ENCODE measurements at regions of chr13 and their contacts with region 1.

Region 1: GRCh38 chr13:102460801-102461200 is 59.0 kb upstream of the FGF14 start:
- DNase-seq: no peak
- H3K4me3 Mint-ChIP-seq: no peak overlapping the region
- H3K27ac Mint-ChIP-seq: no peak overlapping the region
- H3K4me1 Mint-ChIP-seq: peaks cover 5% of the 10 kb centered on the region
- H3K27me3 Mint-ChIP-seq: peaks cover 11% of the 10 kb centered on the region

Region 2: DNA sequence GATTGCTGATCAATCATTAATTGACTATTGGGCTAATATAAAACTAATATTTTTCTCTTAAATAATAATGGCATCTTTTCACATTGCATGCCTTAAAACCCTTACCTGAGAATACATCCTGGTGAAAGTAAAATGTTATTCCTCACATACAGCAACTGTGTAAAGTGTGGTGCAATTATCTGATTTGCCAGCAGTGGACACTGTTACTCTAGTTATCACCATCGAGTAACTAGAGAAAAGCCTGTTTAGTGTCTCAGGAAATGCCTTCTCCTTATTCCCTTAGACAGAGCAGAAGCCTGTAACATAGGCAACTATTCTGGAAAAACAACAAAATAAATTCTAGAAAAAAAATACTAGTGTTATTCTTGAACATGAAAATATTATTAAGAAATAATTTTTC is 518.8 kb before region 1 on chr13:
- CTCF ChIA-PET with region 1: interaction called, 11 read pairs
- POLR2A ChIA-PET with region 1: no interaction called
- intact Hi-C with region 1: loop called (anchors 1 kb)
- DNase-seq: no peak
- H3K4me3 Mint-ChIP-seq: no peak overlapping the region
- H3K27ac Mint-ChIP-seq: no peak overlapping the region
- H3K4me1 Mint-ChIP-seq: no peaks in the 10 kb centered on the region
- H3K27me3 Mint-ChIP-seq: peaks cover 6% of the 10 kb centered on the region

Region 3: DNA sequence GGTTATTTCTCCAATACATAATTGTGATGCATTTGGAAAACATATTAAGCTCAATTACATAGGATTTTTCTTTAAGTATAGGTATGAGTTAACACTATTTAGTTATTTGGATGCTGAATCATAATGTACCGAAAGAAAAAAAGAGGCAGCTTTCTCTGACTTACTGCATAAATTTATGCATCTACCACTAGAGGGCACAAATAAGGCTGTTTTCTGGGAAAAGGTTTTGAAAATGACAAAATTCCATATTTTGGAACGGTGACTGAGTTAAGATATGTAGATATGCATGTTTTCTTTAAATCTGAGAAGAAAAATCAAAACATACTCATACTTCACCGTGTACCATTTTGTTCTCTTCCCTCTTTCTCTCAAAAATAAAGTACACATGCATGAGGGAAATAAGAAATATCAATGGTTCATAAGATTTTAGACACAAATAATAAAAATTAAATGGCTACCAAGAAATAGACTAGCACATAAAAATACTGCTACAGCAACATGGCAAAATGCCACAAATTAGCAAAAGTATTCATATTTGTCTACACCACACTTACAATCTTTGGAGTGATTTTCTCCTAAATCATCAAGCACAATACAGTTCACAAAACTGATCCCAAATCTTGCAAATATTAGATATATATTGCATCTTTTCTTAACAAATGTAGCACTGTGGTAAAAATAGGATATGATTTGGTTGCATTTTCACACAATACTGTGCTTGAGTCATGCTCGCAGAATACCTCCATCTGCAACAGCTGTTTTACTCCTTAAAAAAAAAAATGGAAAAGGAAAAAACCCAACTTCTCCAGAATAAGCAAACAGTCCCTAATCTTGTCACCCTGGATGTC is 319.0 kb before region 1 on chr13:
- CTCF ChIA-PET with region 1: interaction called, 15 read pairs
- POLR2A ChIA-PET with region 1: no interaction called
- intact Hi-C with region 1: loop called (anchors 1 kb)
- DNase-seq: no peak
- H3K4me3 Mint-ChIP-seq: no peak overlapping the region
- H3K27ac Mint-ChIP-seq: no peak overlapping the region
- H3K4me1 Mint-ChIP-seq: no peaks in the 10 kb centered on the region
- H3K27me3 Mint-ChIP-seq: no peaks in the 10 kb centered on the region

Region 4: DNA sequence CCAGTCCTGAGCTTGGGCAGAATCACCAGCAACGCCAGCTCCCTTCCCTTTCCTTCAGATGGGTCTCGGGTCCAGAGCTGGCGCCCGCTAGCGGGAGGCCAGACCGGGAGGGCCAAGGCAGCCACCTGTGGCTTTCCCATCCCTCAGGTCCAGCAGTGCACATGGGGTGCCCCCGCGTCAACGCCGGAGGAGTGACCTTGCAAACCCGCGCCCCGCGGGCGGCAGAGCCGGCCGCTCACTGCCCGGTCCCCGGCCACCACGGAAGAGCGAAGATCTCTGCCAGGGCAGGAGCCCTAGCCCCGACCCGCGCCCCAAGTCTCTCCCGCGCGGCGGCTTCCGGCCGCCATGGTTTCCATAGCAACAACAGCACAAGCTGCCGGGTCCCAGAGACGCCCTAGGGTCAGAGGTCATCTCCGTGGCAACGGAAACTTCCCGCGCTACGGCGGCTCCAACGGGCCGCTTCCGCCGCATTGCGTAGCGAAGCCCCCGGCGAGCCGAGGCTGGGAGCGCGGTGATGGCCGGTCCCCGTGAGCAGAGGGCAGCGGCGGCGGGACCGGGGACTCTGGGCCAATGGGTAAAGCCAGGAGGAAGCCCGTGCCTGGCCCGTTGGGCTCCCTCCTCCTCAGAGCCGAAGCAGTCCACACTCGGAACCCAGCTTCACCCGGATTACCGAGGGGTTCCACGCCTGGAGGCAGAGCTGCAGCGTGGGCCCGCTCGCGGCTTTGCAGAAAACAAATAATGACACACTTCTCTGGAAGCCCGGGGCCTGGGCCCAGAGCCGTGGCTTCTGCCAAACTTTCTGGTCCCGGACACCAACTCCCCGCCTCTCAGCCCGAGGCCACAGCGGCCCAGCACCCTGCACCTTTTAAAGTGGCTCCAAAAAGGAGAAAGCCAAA is 66.4 kb before region 1 on chr13:
- CTCF ChIA-PET with region 1: interaction called, 3 read pairs
- POLR2A ChIA-PET with region 1: no interaction called
- intact Hi-C with region 1: loop called (anchors 2 kb)
- DNase-seq: peak; percentile 97
- H3K4me3 Mint-ChIP-seq: peak overlapping the region; percentile 78
- H3K27ac Mint-ChIP-seq: peak overlapping the region; percentile 69
- H3K4me1 Mint-ChIP-seq: peaks cover 21% of the 10 kb centered on the region
- H3K27me3 Mint-ChIP-seq: peaks cover 10% of the 10 kb centered on the region

Region 5: DNA sequence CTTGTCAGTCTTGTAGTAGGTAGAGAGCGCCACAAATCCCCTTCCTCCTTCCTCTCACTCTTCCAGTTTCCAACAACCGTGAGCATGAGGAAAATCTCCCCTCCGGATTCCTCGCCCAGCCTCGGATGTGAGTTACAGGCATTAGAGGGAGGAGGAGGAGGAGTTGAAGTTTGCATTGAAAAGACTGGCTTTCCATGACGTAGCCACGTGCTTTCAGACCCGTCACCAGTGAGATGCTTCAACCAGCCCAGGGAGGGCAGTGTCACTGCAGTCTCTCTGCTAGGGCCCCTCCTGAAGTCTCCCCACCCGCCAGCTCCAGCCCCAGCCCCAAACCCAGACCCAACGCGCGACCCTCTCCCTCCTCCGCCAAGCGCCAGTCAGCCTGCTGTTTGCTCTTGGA is 58.5 kb before region 1 on chr13:
- CTCF ChIA-PET with region 1: no interaction called
- POLR2A ChIA-PET with region 1: no interaction called
- intact Hi-C with region 1: loop called (anchors 1 kb)
- DNase-seq: peak; percentile 61
- H3K4me3 Mint-ChIP-seq: peak overlapping the region; percentile 42
- H3K27ac Mint-ChIP-seq: no peak overlapping the region
- H3K4me1 Mint-ChIP-seq: peaks cover 26% of the 10 kb centered on the region
- H3K27me3 Mint-ChIP-seq: peaks cover 54% of the 10 kb centered on the region

Region 6: DNA sequence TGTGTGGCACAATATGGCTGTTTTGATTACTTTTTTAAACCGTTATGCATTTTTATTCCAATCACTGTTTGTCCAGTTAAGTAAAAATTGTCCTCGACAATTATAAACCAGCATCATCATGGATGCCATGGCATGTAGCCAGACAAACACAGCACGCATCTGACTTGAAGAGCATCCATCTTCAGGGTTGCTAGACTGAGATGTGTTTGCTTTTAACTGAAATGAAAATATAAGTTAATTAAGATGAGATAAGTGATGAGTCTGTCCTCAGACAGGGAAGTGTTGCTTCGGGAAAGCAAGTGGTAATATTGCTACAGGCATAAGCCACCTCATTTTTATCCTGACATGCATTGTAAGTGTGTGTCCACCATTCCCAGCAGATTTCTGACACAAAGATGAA is 43.2 kb after region 1 on chr13:
- CTCF ChIA-PET with region 1: no interaction called
- POLR2A ChIA-PET with region 1: no interaction called
- intact Hi-C with region 1: no loop called
- DNase-seq: no peak
- H3K4me3 Mint-ChIP-seq: no peak overlapping the region
- H3K27ac Mint-ChIP-seq: no peak overlapping the region
- H3K4me1 Mint-ChIP-seq: no peaks in the 10 kb centered on the region
- H3K27me3 Mint-ChIP-seq: peaks cover 6% of the 10 kb centered on the region